ENCODE measurements at regions of chrX and their contacts with region 1.

Region 1: DNA sequence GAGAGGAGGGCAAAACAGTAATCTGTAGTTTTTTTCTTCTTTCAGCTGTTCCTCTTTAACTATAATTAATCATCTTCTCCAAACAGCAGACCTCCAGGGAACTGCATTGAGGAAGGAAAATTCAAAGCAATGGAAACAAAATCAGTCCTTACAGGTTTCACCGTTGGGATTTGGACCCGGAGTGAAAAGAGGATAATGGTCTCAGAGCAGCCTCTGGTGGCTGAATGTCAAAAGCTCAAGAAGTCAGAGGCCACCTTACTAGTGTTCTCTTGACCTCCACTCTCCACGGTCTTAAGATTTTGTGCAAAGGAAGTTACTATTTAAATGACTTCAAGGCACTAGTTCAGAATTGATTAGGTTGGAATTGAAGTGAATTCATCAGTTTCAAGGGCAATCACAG is 16.0 kb upstream of the MID1 start:
- DNase-seq: peak; percentile 46
- H3K4me3 ChIP-seq: no peak overlapping the region
- H3K27ac ChIP-seq: peak overlapping the region; percentile 98
- H3K4me1 ChIP-seq: peaks cover 19% of the 10 kb centered on the region
- H3K27me3 ChIP-seq: no peaks in the 10 kb centered on the region
- CTCF ChIP-seq: peak; percentile 64 to 73

Region 2: DNA sequence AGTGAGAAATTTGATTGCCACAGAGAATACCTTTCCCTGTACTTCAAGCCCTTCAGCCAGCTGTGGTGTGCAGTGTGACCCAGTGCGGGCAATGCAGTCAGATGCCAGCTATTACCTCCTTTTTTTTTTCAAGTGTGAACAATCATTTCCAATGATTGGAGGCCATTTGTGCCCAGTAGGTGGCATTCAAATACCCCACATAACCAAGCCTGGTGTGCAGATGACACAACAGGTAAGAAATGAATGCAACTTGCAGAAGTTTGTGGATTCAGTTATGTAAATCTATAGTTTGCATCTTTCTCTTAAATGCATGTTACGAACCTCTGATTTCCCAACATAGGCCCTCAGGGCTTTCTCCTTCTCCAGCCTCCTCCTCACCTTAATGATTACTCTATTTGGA is 381.6 kb before region 1 on chrX:
- CTCF ChIA-PET with region 1: no interaction called
- dilution Hi-C with region 1: no loop called
- in situ Hi-C with region 1: no loop called
- intact Hi-C with region 1: loop called (anchors 1 kb)
- DNase-seq: peak; percentile 40
- H3K4me3 ChIP-seq: no peak overlapping the region
- H3K27ac ChIP-seq: no peak overlapping the region
- H3K4me1 ChIP-seq: no peaks in the 10 kb centered on the region
- H3K27me3 ChIP-seq: no peaks in the 10 kb centered on the region
- CTCF ChIP-seq: peak in 1 of 2 donors; percentile 55

Region 3: GRCh38 chrX:10288384-10288975 is 347.9 kb before region 1 on chrX:
- CTCF ChIA-PET with region 1: no interaction called
- dilution Hi-C with region 1: no loop called
- in situ Hi-C with region 1: no loop called
- intact Hi-C with region 1: no loop called
- DNase-seq: no peak
- H3K4me3 ChIP-seq: no peak overlapping the region
- H3K27ac ChIP-seq: no peak overlapping the region
- H3K4me1 ChIP-seq: no peaks in the 10 kb centered on the region
- H3K27me3 ChIP-seq: no peaks in the 10 kb centered on the region
- CTCF ChIP-seq: no peak

Region 4: GRCh38 chrX:10447577-10448214 is 188.6 kb before region 1 on chrX:
- CTCF ChIA-PET with region 1: no interaction called
- dilution Hi-C with region 1: no loop called
- in situ Hi-C with region 1: no loop called
- intact Hi-C with region 1: loop called (anchors 10 kb)
- DNase-seq: peak; percentile 47
- H3K4me3 ChIP-seq: no peak overlapping the region
- H3K27ac ChIP-seq: no peak overlapping the region
- H3K4me1 ChIP-seq: peaks cover 25% of the 10 kb centered on the region
- H3K27me3 ChIP-seq: no peaks in the 10 kb centered on the region
- CTCF ChIP-seq: no peak

Region 5: DNA sequence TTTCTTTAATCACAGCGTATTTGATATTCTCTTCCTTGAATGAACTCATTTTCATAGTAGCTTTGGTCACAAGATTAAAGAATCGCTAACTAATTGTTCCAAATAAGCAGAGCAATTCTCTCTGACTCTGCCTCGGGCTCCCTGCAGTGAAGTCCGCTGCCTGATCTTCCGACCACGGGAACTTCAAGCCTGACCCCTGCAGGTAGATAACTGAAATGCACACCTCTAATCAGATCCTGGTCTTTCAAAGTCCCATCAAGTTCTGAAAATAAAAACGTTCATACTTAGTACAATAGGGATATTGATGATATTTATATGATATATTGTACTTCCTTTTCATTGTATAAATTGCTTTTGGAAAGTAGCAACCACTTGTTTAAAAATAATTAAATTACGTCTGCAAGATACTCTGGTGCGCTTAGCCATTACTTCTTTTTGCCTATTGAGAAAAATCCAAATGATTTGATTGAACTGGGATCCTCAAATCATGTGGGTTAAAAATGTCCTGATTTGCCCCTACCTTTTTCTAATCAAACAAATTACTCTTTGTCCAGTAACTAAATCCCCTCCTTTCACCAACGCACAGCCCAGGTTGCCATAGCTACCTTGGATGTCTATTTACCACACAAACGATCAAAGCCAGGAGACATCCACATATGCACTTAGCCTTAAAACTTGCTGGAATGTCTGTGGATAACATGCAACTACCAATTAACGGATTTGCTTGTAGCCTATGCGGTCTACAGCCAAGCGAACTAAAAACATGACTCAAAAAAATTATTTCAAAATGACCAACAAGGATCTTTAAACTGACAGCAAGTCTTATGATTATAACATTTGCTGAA is 20.2 kb before region 1 on chrX:
- CTCF ChIA-PET with region 1: no interaction called
- dilution Hi-C with region 1: no loop called
- in situ Hi-C with region 1: no loop called
- intact Hi-C with region 1: loop called (anchors 1 kb)
- DNase-seq: no peak
- H3K4me3 ChIP-seq: peak overlapping the region in 2 of 3 experiments; percentile 12 to 15
- H3K27ac ChIP-seq: peak overlapping the region; percentile 76
- H3K4me1 ChIP-seq: peaks cover 3% of the 10 kb centered on the region
- H3K27me3 ChIP-seq: no peaks in the 10 kb centered on the region
- CTCF ChIP-seq: peak; percentile 63 to 67

Region 6: DNA sequence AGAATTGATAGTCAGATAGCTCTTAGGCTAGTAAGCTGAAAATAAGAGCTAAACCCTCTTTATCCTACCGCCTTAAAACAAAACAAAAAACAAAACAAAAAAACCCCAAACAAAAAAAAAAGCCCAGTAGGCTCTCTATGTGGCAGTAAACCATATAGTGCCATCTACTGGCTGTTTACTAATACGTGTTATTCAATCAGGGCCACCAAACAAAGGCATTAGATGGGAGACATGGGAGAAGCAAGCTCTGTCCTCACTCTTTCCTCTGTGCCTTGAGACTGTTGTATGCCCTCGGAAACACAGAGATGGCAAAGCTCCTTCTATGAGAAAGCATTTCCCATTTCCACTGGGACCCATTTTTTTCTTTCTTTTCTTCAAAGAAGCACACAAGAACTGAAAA is 132.9 kb after region 1 on chrX:
- CTCF ChIA-PET with region 1: no interaction called
- dilution Hi-C with region 1: no loop called
- in situ Hi-C with region 1: no loop called
- intact Hi-C with region 1: loop called (anchors 5 kb)
- DNase-seq: peak; percentile 12
- H3K4me3 ChIP-seq: no peak overlapping the region
- H3K27ac ChIP-seq: no peak overlapping the region
- H3K4me1 ChIP-seq: peaks cover 4% of the 10 kb centered on the region
- H3K27me3 ChIP-seq: no peaks in the 10 kb centered on the region
- CTCF ChIP-seq: peak; percentile 36 to 61

Measured in mammary epithelial cell (primary cell).